ENCODE measurements at regions of chr2 and their contacts with region 1.

Region 1: DNA sequence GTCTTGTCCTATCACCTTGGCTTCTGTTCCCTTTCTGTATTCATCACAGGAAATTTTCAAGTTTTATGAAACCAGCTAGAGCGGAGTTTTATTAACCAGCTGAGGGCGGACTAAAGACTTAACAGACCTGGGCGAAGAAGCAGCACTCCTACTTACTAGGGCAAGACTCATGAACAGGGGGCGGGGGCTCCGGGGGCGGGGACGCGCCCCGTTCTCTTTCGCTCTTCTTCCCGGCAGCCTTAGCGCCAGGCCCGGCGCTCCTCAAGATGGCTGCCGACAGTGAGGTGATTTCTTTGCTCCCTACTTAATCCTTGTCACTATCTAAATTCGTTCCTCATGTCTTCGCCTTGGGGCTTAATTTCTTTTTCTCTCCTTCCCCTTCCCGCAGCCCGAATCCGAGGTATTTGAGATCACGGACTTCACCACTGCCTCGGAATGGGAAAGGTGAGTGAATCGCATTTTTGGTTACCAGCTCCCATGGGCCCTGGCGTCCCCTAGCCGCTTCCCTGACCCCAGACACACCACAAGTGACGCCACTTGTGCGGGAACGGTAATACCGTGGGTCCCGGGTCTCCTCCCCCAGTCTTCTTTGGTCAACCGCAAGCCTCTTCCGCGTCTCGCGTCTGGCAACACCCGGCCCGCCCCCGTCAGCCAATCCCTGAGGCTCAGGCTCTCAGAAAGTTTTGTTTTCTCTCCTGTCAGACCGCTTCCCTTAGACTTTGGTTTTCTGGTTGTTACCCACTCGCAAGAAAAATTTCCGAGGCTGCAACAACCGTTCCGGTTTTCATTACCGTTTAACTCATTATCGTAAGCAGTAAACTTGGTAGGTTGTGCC is at the start of gene RAB3GAP1:
- DNase-seq: peak; percentile 91
- H3K4me3 Mint-ChIP-seq: peak within 1 kb of the TSS; percentile 96
- H3K27ac Mint-ChIP-seq: peak within 1 kb of the TSS; percentile 100
- H3K4me1 Mint-ChIP-seq: peaks cover 47% of the 10 kb centered on the region
- H3K27me3 Mint-ChIP-seq: no peaks in the 10 kb centered on the region
- total RNA-seq, gene RAB3GAP1: 26.6 and 30.8 TPM in 2 replicates

Region 2: DNA sequence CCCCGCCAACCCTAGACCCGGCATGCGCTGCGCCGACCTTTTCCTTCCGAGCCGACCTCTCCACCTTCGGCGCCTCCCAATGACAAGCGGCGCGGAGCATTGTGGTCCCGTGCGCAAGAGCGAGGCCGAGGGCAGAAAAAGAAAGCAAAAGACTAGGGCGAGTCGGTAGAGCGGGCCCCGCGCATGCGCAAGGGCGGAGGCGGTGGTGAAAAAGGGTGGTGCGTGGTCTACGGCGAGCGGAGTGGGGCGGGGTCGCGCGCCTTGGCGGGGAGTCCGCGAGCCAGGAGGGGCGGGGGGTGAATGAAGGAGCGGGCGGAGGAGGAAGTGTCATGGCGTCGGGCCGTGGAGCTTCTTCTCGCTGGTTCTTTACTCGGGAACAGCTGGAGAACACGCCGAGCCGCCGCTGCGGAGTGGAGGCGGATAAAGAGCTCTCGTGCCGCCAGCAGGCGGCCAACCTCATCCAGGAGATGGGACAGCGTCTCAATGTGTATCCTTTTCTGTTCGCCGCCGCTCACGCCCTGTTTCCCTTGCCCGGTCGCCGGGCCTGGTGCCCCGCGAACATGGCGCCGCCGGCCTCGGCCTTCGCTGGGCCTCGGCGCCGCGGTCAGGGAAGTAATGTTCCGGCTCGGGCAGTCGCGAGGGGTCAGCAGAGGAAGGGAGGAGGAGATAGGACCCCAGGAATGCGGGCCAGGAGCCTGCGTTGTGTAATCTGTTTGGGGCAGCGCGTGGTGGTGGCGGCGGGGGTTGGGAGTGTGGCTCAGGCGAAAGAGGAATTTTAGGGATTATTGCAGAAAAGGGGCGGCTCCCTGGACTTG is 133.5 kb before region 1 on chr2 and contains the start of gene CCNT2:
- intact Hi-C with region 1: loop called (anchors 1 kb)
- DNase-seq: peak; percentile 100
- H3K4me3 Mint-ChIP-seq: peak within 1 kb of the TSS; percentile 99
- H3K27ac Mint-ChIP-seq: peak within 1 kb of the TSS; percentile 98
- H3K4me1 Mint-ChIP-seq: peaks cover 20% of the 10 kb centered on the region
- H3K27me3 Mint-ChIP-seq: peaks cover 3% of the 10 kb centered on the region
- total RNA-seq, gene CCNT2: 39.2 and 41.0 TPM in 2 replicates

Region 3: DNA sequence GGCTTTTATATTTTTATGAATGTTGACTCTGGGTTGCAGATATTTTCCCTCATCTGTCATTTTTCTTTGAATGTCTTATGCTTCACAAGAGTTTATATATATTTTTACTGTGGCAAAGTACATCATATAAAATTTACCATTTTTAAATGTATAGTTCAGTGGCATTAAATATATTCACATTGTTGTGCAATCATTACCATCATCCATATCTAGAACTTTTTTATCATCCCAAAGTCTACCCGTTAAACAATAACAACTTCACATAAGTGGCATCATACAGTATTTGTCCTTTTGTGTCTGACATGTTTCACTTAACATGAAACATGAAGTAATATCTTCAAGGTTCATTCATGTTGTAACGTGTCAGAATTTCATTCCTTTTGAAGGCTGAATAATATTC is 24.3 kb after region 1 on chr2:
- intact Hi-C with region 1: no loop called
- DNase-seq: no peak
- H3K4me3 Mint-ChIP-seq: no peak overlapping the region
- H3K27ac Mint-ChIP-seq: no peak overlapping the region
- H3K4me1 Mint-ChIP-seq: no peaks in the 10 kb centered on the region
- H3K27me3 Mint-ChIP-seq: no peaks in the 10 kb centered on the region

Region 4: GRCh38 chr2:135150684-135151083 is 98.4 kb after region 1 on chr2:
- intact Hi-C with region 1: loop called (anchors 5 kb)
- DNase-seq: no peak
- H3K4me3 Mint-ChIP-seq: no peak overlapping the region
- H3K27ac Mint-ChIP-seq: no peak overlapping the region
- H3K4me1 Mint-ChIP-seq: peaks cover 34% of the 10 kb centered on the region
- H3K27me3 Mint-ChIP-seq: no peaks in the 10 kb centered on the region

Region 5: GRCh38 chr2:135311268-135311667 is 259.0 kb after region 1 on chr2:
- intact Hi-C with region 1: loop called (anchors 2 kb)
- DNase-seq: no peak
- H3K4me3 Mint-ChIP-seq: no peak overlapping the region
- H3K27ac Mint-ChIP-seq: peak overlapping the region; percentile 71
- H3K4me1 Mint-ChIP-seq: peaks cover 10% of the 10 kb centered on the region
- H3K27me3 Mint-ChIP-seq: no peaks in the 10 kb centered on the region

Region 6: GRCh38 chr2:135741395-135742324 is 689.4 kb after region 1 on chr2 and contains the start of gene UBXN4:
- intact Hi-C with region 1: loop called (anchors 2 kb)
- DNase-seq: peak; percentile 90
- H3K4me3 Mint-ChIP-seq: peak within 1 kb of the TSS; percentile 98
- H3K27ac Mint-ChIP-seq: peak within 1 kb of the TSS; percentile 100
- H3K4me1 Mint-ChIP-seq: peaks cover 34% of the 10 kb centered on the region
- H3K27me3 Mint-ChIP-seq: no peaks in the 10 kb centered on the region
- total RNA-seq, gene UBXN4: 118 and 138 TPM in 2 replicates

Region 7: DNA sequence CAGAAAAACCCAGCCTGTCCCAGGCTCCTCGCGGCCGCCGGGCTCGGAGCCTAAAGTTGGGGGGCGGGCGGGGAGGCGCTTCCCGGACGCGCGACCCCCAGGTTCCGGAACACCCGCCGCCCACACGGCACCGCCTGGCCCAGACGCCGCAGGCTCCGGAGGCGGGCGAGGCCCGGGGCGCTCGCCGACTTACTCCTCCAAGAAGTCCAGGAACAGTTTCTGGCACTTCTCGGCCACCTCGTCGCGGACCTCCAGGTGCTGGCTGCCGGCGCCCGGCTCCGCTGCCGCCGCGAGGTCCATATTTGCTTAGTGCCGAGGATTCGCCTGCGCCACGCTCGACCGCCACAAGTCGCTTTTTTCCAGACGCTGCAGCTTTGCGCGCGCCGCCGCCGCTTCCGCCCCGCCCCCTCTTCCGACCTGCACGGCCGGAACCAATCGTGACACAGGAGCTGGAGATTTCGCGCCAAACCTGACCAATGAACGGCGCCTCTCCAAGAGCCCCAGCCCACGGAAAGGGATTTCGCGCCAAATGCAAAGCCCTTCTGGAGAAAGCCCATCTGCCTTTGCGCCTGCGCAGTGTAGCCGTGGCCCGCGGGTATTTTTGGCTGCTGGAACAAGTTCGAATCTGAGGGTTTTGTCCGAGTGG is 823.9 kb after region 1 on chr2 and contains the start of gene MCM6:
- intact Hi-C with region 1: loop called (anchors 10 kb)
- DNase-seq: peak; percentile 98
- H3K4me3 Mint-ChIP-seq: peak within 1 kb of the TSS; percentile 95
- H3K27ac Mint-ChIP-seq: peak within 1 kb of the TSS; percentile 92
- H3K4me1 Mint-ChIP-seq: peaks cover 37% of the 10 kb centered on the region
- H3K27me3 Mint-ChIP-seq: no peaks in the 10 kb centered on the region
- total RNA-seq, gene MCM6: 190 and 191 TPM in 2 replicates

Measured in activated T-helper 2 cell treated with anti-CD3 and anti-CD28 coated beads, Interferon-gamma antibody, Interleukin-2, Interleukin-4, amounts not matched to agents 10 μg/mL and 5 μg/mL and 100 μg/mL, durations not matched to agents 14 hours and 24 hours and 36 hours (primary cell).